Activated B cell treated with CpG ODN at 0.5 μM for 24 hours (primary cell): ENCODE measurements at regions of chr9 and their contacts with region 1.

Region 1: GRCh38 chr9:34010979-34011378 is 37.7 kb downstream of the UBAP2 start:
- DNase-seq: no peak
- ATAC-seq: peak; percentile 31
- H3K4me3 Mint-ChIP-seq: no peak overlapping the region
- H3K27ac Mint-ChIP-seq: no peak overlapping the region
- H3K4me1 Mint-ChIP-seq: no peaks in the 10 kb centered on the region
- H3K27me3 Mint-ChIP-seq: no peaks in the 10 kb centered on the region
- CTCF ChIP-seq: peak; percentile 62

Region 2: GRCh38 chr9:34048923-34049697 is 38.1 kb after region 1 on chr9:
- CTCF ChIA-PET with region 1: no interaction called
- POLR2A ChIA-PET with region 1: interaction called, 5 read pairs
- intact Hi-C with region 1: loop called (anchors 5 kb)
- DNase-seq: peak; percentile 97
- ATAC-seq: peak; percentile 80
- H3K4me3 Mint-ChIP-seq: peak overlapping the region; percentile 99
- H3K27ac Mint-ChIP-seq: peak overlapping the region; percentile 100
- H3K4me1 Mint-ChIP-seq: peaks cover 25% of the 10 kb centered on the region
- H3K27me3 Mint-ChIP-seq: no peaks in the 10 kb centered on the region
- CTCF ChIP-seq: no peak

Region 3: GRCh38 chr9:34139477-34140146 is 128.6 kb after region 1 on chr9:
- CTCF ChIA-PET with region 1: no interaction called
- POLR2A ChIA-PET with region 1: no interaction called
- intact Hi-C with region 1: loop called (anchors 1 kb)
- DNase-seq: no peak
- ATAC-seq: no peak
- H3K4me3 Mint-ChIP-seq: no peak overlapping the region
- H3K27ac Mint-ChIP-seq: no peak overlapping the region
- H3K4me1 Mint-ChIP-seq: no peaks in the 10 kb centered on the region
- H3K27me3 Mint-ChIP-seq: peaks cover 27% of the 10 kb centered on the region
- CTCF ChIP-seq: no peak

Region 4: GRCh38 chr9:34158362-34158869 is 147.4 kb after region 1 on chr9:
- CTCF ChIA-PET with region 1: interaction called, 8 read pairs
- POLR2A ChIA-PET with region 1: no interaction called
- intact Hi-C with region 1: loop called (anchors 1 kb)
- DNase-seq: no peak
- ATAC-seq: no peak
- H3K4me3 Mint-ChIP-seq: no peak overlapping the region
- H3K27ac Mint-ChIP-seq: no peak overlapping the region
- H3K4me1 Mint-ChIP-seq: no peaks in the 10 kb centered on the region
- H3K27me3 Mint-ChIP-seq: peaks cover 11% of the 10 kb centered on the region
- CTCF ChIP-seq: no peak